Psoas muscle (tissue), 8 donors: ENCODE measurements at regions of chr6 and their contacts with region 1.

Region 1: DNA sequence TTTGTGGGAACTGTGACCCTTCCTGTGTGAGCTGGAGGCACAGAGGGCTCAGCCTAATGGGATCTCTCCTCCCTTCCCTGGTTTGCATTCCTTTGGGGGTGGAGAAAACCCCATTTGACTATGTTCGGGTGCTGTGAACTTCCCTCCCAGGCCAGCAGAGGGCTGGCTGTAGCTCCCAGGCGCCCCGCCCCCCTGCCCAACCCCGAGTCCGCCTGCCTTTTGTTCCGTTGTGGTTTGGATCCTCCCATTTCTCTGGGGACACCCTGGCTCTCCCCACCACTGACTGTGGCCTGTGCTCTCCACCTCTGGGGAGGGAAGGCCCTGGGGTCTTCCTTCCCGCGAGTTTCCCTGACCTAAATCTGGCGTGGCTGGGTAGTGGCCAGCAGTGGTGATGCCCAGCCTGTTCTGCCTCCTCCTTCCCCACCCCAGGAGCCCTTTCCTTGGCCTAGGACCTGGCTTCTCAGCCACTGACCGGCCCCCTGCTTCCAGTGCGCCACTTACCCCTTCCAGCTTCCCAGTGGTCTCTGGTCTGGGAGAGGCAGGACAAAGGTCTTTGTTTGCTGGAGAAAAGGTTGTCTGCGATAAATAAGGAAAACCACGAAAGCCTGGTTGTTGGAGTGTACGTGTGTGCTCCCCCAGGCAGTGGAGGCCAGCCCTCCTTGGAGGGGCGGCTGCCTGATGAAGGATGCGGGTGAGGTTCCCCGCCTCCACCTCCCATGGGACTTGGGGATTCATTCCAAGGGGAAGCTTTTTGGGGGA is 4.9 kb downstream of the VEGFA start:
- DNase-seq: peak; percentile 83 to 88
- ATAC-seq: peak; percentile 7 to 30 (median 13)
- H3K4me3 ChIP-seq: peak overlapping the region; percentile 97
- H3K27ac ChIP-seq: peak overlapping the region; percentile 99
- H3K4me1 ChIP-seq: peaks cover 62% of the 10 kb centered on the region
- H3K27me3 ChIP-seq: no peaks in the 10 kb centered on the region
- CTCF ChIP-seq: peak; percentile 76

Region 2: DNA sequence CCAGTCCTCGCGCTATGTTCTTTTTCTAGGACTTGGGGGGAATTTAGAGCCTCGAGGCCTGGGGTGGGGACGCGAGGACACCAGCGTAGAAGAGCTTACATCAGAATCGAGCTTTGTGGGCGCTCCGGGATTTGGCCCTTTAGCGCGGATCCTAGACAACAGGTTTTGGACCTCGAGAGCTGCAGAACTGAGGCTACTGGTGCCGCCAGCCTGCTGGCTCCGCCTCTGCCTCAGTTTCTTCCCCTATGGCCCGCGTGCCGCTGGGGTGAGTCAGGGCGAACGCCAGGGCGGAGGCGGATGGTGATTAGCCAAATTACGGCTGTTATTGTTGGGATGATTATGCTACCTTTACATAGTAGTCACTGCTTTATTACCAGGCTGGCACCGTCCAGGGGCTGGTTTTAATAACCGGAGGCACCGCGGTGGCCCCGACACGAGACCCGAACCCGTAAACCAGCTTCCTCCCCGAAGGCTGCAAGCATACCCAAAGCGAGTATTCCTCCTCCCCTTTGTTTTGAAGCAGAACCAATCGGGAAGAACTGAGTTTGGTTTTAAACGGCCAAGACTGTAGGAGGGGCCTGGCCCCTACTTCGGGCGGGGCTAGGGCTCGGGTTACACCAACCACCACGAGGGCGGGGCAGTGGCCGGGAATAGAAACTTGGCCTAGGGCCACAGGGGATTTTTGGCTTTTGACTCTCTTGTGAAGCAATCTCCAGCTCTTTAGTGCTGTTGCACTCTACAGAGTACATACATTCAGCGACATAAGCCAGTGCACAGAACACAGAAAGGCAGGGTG is 145.3 kb before region 1 on chr6:
- intact Hi-C with region 1: no loop called
- DNase-seq: peak; percentile 95 to 97
- ATAC-seq: peak; percentile 85 to 90 (median 86)
- H3K4me3 ChIP-seq: peak overlapping the region; percentile 89
- H3K27ac ChIP-seq: peak overlapping the region; percentile 95
- H3K4me1 ChIP-seq: peaks cover 26% of the 10 kb centered on the region
- H3K27me3 ChIP-seq: no peaks in the 10 kb centered on the region
- CTCF ChIP-seq: no peak

Region 3: GRCh38 chr6:43798688-43799444 is 23.9 kb after region 1 on chr6:
- intact Hi-C with region 1: loop called in 1 of 2 experiments (anchors 2 kb)
- DNase-seq: peak; percentile 85 to 95
- ATAC-seq: peak; percentile 92 to 97 (median 94)
- H3K4me3 ChIP-seq: no peak overlapping the region
- H3K27ac ChIP-seq: peak overlapping the region; percentile 89
- H3K4me1 ChIP-seq: peaks cover 59% of the 10 kb centered on the region
- H3K27me3 ChIP-seq: no peaks in the 10 kb centered on the region
- CTCF ChIP-seq: no peak

Region 4: GRCh38 chr6:43838276-43839036 is 63.5 kb after region 1 on chr6:
- intact Hi-C with region 1: loop called in 1 of 2 experiments (anchors 2 kb)
- DNase-seq: peak; percentile 60 to 79
- ATAC-seq: peak; percentile 83 to 90 (median 86)
- H3K4me3 ChIP-seq: no peak overlapping the region
- H3K27ac ChIP-seq: peak overlapping the region; percentile 46
- H3K4me1 ChIP-seq: peaks cover 13% of the 10 kb centered on the region
- H3K27me3 ChIP-seq: no peaks in the 10 kb centered on the region
- CTCF ChIP-seq: peak; percentile 42

Region 5: GRCh38 chr6:44246663-44247337 is 471.8 kb after region 1 on chr6 and contains the start of gene HSP90AB1:
- intact Hi-C with region 1: loop called in 1 of 2 experiments (anchors 2 kb)
- DNase-seq: peak; percentile 93 to 96
- ATAC-seq: peak; percentile 84 to 86 (median 84)
- H3K4me3 ChIP-seq: peak within 1 kb of the TSS; percentile 82
- H3K27ac ChIP-seq: peak within 1 kb of the TSS; percentile 100
- H3K4me1 ChIP-seq: peaks cover 30% of the 10 kb centered on the region
- H3K27me3 ChIP-seq: no peaks in the 10 kb centered on the region
- CTCF ChIP-seq: no peak
- total RNA-seq, gene HSP90AB1: 1,150 to 1,595 (median 1,339) TPM